ENCODE measurements at regions of chr10 and their contacts with region 1.

Region 1: GRCh38 chr10:47384148-47384921 is at the start of gene ZNF488:
- DNase-seq: peak; percentile 83 to 91
- ATAC-seq: peak; percentile 97 to 100 (median 99)
- H3K4me3 ChIP-seq: peak within 1 kb of the TSS; percentile 81
- H3K27ac ChIP-seq: peak within 1 kb of the TSS; percentile 73
- H3K4me1 ChIP-seq: peaks cover 4% of the 10 kb centered on the region
- H3K27me3 ChIP-seq: no peaks in the 10 kb centered on the region
- CTCF ChIP-seq: no peak
- total RNA-seq, gene ZNF488: 0.07 to 0.15 (median 0.08) TPM in 3 of 4 donors, not detected in the other

Region 2: GRCh38 chr10:46106410-46107255 is 1277.7 kb before region 1 on chr10:
- intact Hi-C with region 1: loop called in 1 of 2 experiments (anchors 5 kb)
- DNase-seq: peak; percentile 62 to 77
- ATAC-seq: peak; percentile 96 to 99 (median 98)
- H3K4me3 ChIP-seq: peak overlapping the region; percentile 67
- H3K27ac ChIP-seq: no peak overlapping the region
- H3K4me1 ChIP-seq: peaks cover 8% of the 10 kb centered on the region
- H3K27me3 ChIP-seq: no peaks in the 10 kb centered on the region
- CTCF ChIP-seq: peak; percentile 6

Region 3: GRCh38 chr10:46284293-46285229 is 1099.8 kb before region 1 on chr10:
- intact Hi-C with region 1: loop called in 1 of 2 experiments (anchors 2 kb)
- DNase-seq: peak; percentile 84 to 91
- ATAC-seq: peak; percentile 90 to 95 (median 94)
- H3K4me3 ChIP-seq: peak overlapping the region; percentile 82
- H3K27ac ChIP-seq: peak overlapping the region; percentile 51
- H3K4me1 ChIP-seq: no peaks in the 10 kb centered on the region
- H3K27me3 ChIP-seq: no peaks in the 10 kb centered on the region
- CTCF ChIP-seq: no peak

Region 4: DNA sequence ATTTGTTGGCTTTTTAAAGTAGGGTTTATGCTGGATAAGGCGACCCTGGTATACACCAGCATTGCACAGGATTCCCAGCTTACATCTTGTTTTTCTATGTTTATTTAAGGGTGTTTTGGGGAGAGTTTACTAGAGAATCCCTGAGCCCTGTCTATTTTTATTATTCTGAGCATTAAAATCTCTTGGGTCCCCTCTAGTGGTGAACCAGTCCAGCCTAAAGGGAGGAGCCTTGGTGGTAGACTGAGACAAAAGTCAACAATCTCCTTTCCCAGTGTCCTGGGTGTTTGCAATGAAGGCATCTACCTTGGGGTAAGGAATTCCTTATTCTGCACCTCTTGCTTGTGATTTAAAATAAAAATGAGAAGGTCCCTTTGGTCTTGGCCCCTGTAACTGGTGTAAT is 1059.3 kb before region 1 on chr10:
- intact Hi-C with region 1: no loop called
- DNase-seq: no peak
- ATAC-seq: no peak
- H3K4me3 ChIP-seq: no peak overlapping the region
- H3K27ac ChIP-seq: no peak overlapping the region
- H3K4me1 ChIP-seq: no peaks in the 10 kb centered on the region
- H3K27me3 ChIP-seq: no peaks in the 10 kb centered on the region
- CTCF ChIP-seq: peak; percentile 26

Region 5: DNA sequence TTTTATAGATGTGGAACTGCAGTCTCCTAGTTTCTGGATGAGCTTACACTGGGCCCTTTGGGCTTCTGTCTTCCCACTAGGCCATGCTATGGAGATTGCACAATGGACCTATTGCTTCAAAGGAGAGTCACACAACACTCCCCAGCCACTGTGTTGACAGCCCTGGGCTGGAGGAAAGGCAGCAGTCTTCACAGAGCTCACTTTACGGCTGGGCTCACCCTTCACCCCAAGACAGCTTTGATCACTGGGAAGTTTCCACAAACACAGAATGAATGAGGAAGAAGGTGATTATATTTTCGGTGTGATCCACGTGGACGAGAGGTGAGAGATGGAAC is 177.1 kb before region 1 on chr10:
- intact Hi-C with region 1: no loop called
- DNase-seq: no peak
- ATAC-seq: peak in 1 of 4 donors; percentile 60
- H3K4me3 ChIP-seq: no peak overlapping the region
- H3K27ac ChIP-seq: no peak overlapping the region
- H3K4me1 ChIP-seq: no peaks in the 10 kb centered on the region
- H3K27me3 ChIP-seq: no peaks in the 10 kb centered on the region
- CTCF ChIP-seq: no peak